PC-9 (cell line): ENCODE measurements at regions of chr1 and their contacts with region 1.

Region 1: GRCh38 chr1:16904560-16905111 is 8.9 kb downstream of the RNU1-2 start:
- DNase-seq: peak; percentile 79 to 93
- H3K4me3 ChIP-seq: peak overlapping the region; percentile 65
- H3K27ac ChIP-seq: peak overlapping the region; percentile 96
- H3K4me1 ChIP-seq: peaks cover 9% of the 10 kb centered on the region
- H3K27me3 ChIP-seq: no peaks in the 10 kb centered on the region
- CTCF ChIP-seq: no peak

Region 2: GRCh38 chr1:16727190-16728111 is 177.2 kb before region 1 on chr1:
- CTCF ChIA-PET with region 1: no interaction called
- POLR2A ChIA-PET with region 1: no interaction called
- intact Hi-C with region 1: no loop called
- DNase-seq: peak; percentile 46 to 71
- H3K4me3 ChIP-seq: no peak overlapping the region
- H3K27ac ChIP-seq: no peak overlapping the region
- H3K4me1 ChIP-seq: no peaks in the 10 kb centered on the region
- H3K27me3 ChIP-seq: no peaks in the 10 kb centered on the region
- CTCF ChIP-seq: no peak

Region 3: GRCh38 chr1:17053685-17054410 is 149.2 kb after region 1 on chr1 and contains the start of gene SDHB:
- CTCF ChIA-PET with region 1: no interaction called
- POLR2A ChIA-PET with region 1: no interaction called
- intact Hi-C with region 1: loop called (anchors 5 kb)
- DNase-seq: peak; percentile 84 to 98
- H3K4me3 ChIP-seq: peak within 1 kb of the TSS; percentile 71
- H3K27ac ChIP-seq: peak within 1 kb of the TSS; percentile 38; the same call in 1 of the 2 replicates
- H3K4me1 ChIP-seq: peaks cover 7% of the 10 kb centered on the region; the same call in 1 of the 2 replicates
- H3K27me3 ChIP-seq: no peaks in the 10 kb centered on the region
- CTCF ChIP-seq: no peak
- total RNA-seq, gene SDHB: 101 and 123 TPM in 2 replicates

Region 4: DNA sequence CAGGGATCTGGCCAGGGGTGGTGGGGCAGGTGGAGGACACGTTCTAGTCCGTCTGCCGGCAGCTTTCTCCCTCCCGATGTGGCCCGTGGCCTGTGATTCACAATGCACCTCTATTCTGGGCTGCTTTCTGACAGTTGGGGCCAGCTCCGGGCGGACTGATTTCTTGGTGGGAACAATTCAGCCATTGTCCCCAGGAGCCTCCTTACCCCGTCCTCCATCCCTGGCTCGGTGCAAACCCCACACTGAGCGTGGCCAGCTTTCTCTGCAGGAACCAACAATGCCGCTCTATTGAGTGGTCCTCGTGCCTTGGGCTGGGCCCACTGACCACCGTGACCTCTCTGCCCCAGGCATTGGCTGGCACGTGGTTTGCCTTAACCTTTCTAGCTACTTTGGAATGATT is 184.9 kb after region 1 on chr1:
- CTCF ChIA-PET with region 1: no interaction called
- POLR2A ChIA-PET with region 1: no interaction called
- intact Hi-C with region 1: no loop called
- DNase-seq: no peak
- H3K4me3 ChIP-seq: no peak overlapping the region
- H3K27ac ChIP-seq: no peak overlapping the region
- H3K4me1 ChIP-seq: no peaks in the 10 kb centered on the region
- H3K27me3 ChIP-seq: no peaks in the 10 kb centered on the region
- CTCF ChIP-seq: no peak